ENCODE measurements at regions of chr17 and their contacts with region 1.

Region 1: DNA sequence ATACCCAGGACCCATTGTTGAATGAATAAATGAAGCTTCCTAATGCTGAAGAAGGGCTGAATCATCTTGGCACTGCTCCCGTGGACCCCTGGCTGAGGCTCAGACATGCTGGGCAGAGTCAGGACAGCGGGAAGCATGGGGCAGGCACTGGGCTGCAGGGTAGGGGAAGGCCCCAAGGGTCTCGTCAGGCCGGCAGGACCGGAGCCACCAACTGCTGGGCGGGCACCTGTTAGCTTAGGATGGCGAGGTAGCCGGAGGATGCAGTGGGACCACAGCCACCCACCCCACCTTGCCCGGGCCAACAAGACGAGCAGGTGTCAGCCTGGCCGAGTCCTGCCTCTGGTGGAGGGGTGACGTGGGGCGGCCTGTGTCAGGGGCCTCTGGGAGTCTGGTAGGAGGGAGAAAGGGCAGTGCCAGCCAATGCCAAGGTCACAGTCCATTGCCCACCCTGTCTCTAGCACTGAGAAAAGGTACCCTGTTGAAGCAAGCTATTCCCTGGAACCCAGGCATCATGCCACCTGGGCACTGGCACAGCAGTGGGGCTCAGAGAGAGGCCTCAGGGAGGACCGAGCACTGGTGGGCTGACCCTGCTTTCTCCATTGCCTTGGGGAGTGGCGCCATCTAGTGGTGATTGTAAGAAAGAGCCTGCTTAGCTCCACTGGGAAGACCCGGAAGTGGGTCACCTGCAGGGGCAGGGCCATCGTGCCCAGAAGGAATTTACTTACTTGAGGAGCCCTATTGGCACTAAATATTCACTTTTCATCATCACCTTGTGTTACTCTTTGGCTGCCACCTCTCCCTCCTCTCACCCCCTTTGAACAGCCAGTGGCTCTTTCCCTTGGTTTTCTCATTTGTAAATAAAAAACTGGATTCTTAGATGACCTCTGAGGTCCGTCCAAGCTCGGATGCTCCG is 3.0 kb upstream of the DLX3 start:
- DNase-seq: peak; percentile 80 to 83 (median 82)
- H3K4me3 ChIP-seq: no peak overlapping the region
- H3K4me3 Mint-ChIP-seq: peak overlapping the region in 1 of 8 donors; percentile 43
- H3K27ac ChIP-seq: no peak overlapping the region
- H3K27ac Mint-ChIP-seq: peak overlapping the region in 1 of 7 donors; percentile 55
- H3K4me1 ChIP-seq: peaks cover 35% of the 10 kb centered on the region
- H3K4me1 Mint-ChIP-seq: peaks cover 19 to 43% (median 25%) of the 10 kb centered on the region in 4 donors
- H3K27me3 ChIP-seq: peaks cover 61% of the 10 kb centered on the region
- H3K27me3 Mint-ChIP-seq: peaks cover 62 to 64% of the 10 kb centered on the region in 2 donors

Region 2: GRCh38 chr17:49567871-49568694 is 430.0 kb before region 1 on chr17:
- CTCF ChIA-PET with region 1: interaction called, 47 read pairs
- POLR2A ChIA-PET with region 1: no interaction called
- intact Hi-C with region 1: loop called (anchors 1 kb)
- DNase-seq: peak; percentile 68 to 77 (median 74)
- H3K4me3 ChIP-seq: peak overlapping the region in 1 of 2 donors; percentile 56
- H3K4me3 Mint-ChIP-seq: peak overlapping the region; percentile 28 to 82 (median 60)
- H3K27ac ChIP-seq: no peak overlapping the region
- H3K27ac Mint-ChIP-seq: peak overlapping the region in 2 of 7 donors; percentile 46 to 54
- H3K4me1 ChIP-seq: peaks cover 10% of the 10 kb centered on the region
- H3K4me1 Mint-ChIP-seq: peaks cover 8 to 29% (median 19%) of the 10 kb centered on the region in 4 donors
- H3K27me3 ChIP-seq: no peaks in the 10 kb centered on the region
- H3K27me3 Mint-ChIP-seq: peaks cover 6 to 11% of the 10 kb centered on the region in 2 donors

Region 3: GRCh38 chr17:49741009-49741691 is 256.9 kb before region 1 on chr17:
- CTCF ChIA-PET with region 1: no interaction called
- POLR2A ChIA-PET with region 1: no interaction called
- intact Hi-C with region 1: no loop called
- DNase-seq: peak in 1 of 5 donors; percentile 45
- H3K4me3 ChIP-seq: peak overlapping the region; percentile 80 to 88
- H3K4me3 Mint-ChIP-seq: peak overlapping the region; percentile 93 to 99 (median 97)
- H3K27ac ChIP-seq: peak overlapping the region; percentile 99
- H3K27ac Mint-ChIP-seq: peak overlapping the region; percentile 99 to 100 (median 100)
- H3K4me1 ChIP-seq: peaks cover 97% of the 10 kb centered on the region
- H3K4me1 Mint-ChIP-seq: peaks cover 70 to 98% (median 81%) of the 10 kb centered on the region in 4 donors
- H3K27me3 ChIP-seq: no peaks in the 10 kb centered on the region
- H3K27me3 Mint-ChIP-seq: no peaks in the 10 kb centered on the region

Region 4: DNA sequence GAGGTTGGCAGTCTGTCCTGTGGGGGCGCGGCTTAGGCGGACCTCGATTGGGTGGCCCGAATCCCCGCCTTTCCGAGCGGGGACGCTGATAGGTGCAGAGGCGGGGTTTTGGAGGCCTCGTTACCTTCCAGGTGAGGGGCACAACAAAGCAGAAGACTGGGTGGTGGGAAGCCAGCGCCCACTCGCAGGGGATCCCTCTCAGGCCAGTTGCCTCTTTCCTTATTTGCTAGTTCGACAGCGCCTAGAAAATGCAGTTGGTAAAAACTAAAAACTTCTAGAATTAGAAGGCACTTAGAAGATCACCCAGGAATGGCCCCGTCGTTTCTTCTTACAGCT is 208.8 kb before region 1 on chr17:
- CTCF ChIA-PET with region 1: no interaction called
- POLR2A ChIA-PET with region 1: no interaction called
- intact Hi-C with region 1: no loop called
- DNase-seq: no peak
- H3K4me3 ChIP-seq: peak overlapping the region; percentile 33 to 96
- H3K4me3 Mint-ChIP-seq: peak overlapping the region; percentile 93 to 99 (median 96)
- H3K27ac ChIP-seq: peak overlapping the region; percentile 99
- H3K27ac Mint-ChIP-seq: peak overlapping the region; percentile 91 to 100 (median 98)
- H3K4me1 ChIP-seq: peaks cover 59% of the 10 kb centered on the region
- H3K4me1 Mint-ChIP-seq: peaks cover 42 to 70% (median 57%) of the 10 kb centered on the region in 4 donors
- H3K27me3 ChIP-seq: no peaks in the 10 kb centered on the region
- H3K27me3 Mint-ChIP-seq: no peaks in the 10 kb centered on the region

Region 5: DNA sequence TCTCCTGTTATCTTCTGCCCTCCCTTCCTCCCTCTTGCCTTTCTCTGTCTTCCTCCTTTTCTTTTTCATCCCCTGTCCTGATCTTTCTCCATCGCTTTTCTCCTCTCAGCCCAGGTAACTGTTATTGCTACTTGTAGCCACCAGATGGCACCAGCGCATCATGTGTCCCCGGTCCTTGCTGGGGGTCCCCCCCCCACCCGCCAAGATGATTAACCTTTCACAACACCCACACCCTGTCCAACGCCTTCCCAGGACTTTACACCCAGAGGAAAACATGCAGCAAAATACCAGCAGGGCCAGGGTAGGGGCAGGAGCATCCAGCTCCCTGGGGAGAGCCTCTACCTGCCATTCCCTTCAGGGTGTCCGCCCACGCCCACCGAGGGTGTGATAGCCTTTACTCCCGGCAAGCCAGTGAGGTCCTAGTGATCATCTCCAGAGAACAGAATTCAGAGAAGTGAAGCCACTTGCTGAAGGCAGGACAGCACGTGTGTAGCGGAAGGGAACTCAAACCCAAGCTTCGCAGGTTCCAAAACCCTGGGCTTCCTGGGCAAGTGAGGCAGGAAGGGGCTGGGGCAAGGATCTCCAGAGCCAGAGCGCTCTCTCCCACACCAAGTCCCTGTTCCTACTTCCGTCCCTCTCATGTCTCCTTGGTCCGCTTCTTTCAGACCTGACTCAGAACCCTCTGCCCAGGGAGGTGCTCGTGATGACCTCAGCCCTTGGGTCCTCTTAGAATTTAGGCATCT is 136.7 kb before region 1 on chr17:
- CTCF ChIA-PET with region 1: interaction called, 195 read pairs
- POLR2A ChIA-PET with region 1: interaction called, 4 read pairs
- intact Hi-C with region 1: loop called (anchors 1 kb)
- DNase-seq: peak in 4 of 5 donors; percentile 39 to 48 (median 44)
- H3K4me3 ChIP-seq: no peak overlapping the region
- H3K4me3 Mint-ChIP-seq: no peak overlapping the region
- H3K27ac ChIP-seq: no peak overlapping the region
- H3K27ac Mint-ChIP-seq: no peak overlapping the region
- H3K4me1 ChIP-seq: no peaks in the 10 kb centered on the region
- H3K4me1 Mint-ChIP-seq: peaks cover 0 to 3% (median 1%) of the 10 kb centered on the region in 4 donors
- H3K27me3 ChIP-seq: no peaks in the 10 kb centered on the region
- H3K27me3 Mint-ChIP-seq: peaks cover 3 to 7% of the 10 kb centered on the region in 2 donors

Region 6: GRCh38 chr17:49887086-49888028 is 110.7 kb before region 1 on chr17:
- CTCF ChIA-PET with region 1: interaction called, 21 read pairs
- POLR2A ChIA-PET with region 1: no interaction called
- intact Hi-C with region 1: no loop called
- DNase-seq: no peak
- H3K4me3 ChIP-seq: no peak overlapping the region
- H3K4me3 Mint-ChIP-seq: no peak overlapping the region
- H3K27ac ChIP-seq: no peak overlapping the region
- H3K27ac Mint-ChIP-seq: no peak overlapping the region
- H3K4me1 ChIP-seq: no peaks in the 10 kb centered on the region
- H3K4me1 Mint-ChIP-seq: no peaks in the 10 kb centered on the region
- H3K27me3 ChIP-seq: peaks cover 7% of the 10 kb centered on the region
- H3K27me3 Mint-ChIP-seq: peaks cover 31 to 45% of the 10 kb centered on the region in 2 donors

Region 7: GRCh38 chr17:49952209-49952911 is 45.7 kb before region 1 on chr17:
- CTCF ChIA-PET with region 1: interaction called, 212 read pairs
- POLR2A ChIA-PET with region 1: interaction called, 8 read pairs
- intact Hi-C with region 1: loop called (anchors 1 kb)
- DNase-seq: peak; percentile 69 to 78 (median 75)
- H3K4me3 ChIP-seq: no peak overlapping the region
- H3K4me3 Mint-ChIP-seq: no peak overlapping the region
- H3K27ac ChIP-seq: no peak overlapping the region
- H3K27ac Mint-ChIP-seq: no peak overlapping the region
- H3K4me1 ChIP-seq: no peaks in the 10 kb centered on the region
- H3K4me1 Mint-ChIP-seq: peaks cover 0 to 3% (median 0%) of the 10 kb centered on the region in 4 donors
- H3K27me3 ChIP-seq: peaks cover 9% of the 10 kb centered on the region
- H3K27me3 Mint-ChIP-seq: peaks cover 21 to 52% of the 10 kb centered on the region in 2 donors

Region 8: GRCh38 chr17:49980703-49981197 is 17.3 kb before region 1 on chr17:
- CTCF ChIA-PET with region 1: interaction called, 42 read pairs
- POLR2A ChIA-PET with region 1: no interaction called
- intact Hi-C with region 1: no loop called
- DNase-seq: no peak
- H3K4me3 ChIP-seq: no peak overlapping the region
- H3K4me3 Mint-ChIP-seq: no peak overlapping the region
- H3K27ac ChIP-seq: no peak overlapping the region
- H3K27ac Mint-ChIP-seq: no peak overlapping the region
- H3K4me1 ChIP-seq: no peaks in the 10 kb centered on the region
- H3K4me1 Mint-ChIP-seq: no peaks in the 10 kb centered on the region
- H3K27me3 ChIP-seq: no peaks in the 10 kb centered on the region
- H3K27me3 Mint-ChIP-seq: peaks cover 21 to 39% of the 10 kb centered on the region in 2 donors

Region 9: DNA sequence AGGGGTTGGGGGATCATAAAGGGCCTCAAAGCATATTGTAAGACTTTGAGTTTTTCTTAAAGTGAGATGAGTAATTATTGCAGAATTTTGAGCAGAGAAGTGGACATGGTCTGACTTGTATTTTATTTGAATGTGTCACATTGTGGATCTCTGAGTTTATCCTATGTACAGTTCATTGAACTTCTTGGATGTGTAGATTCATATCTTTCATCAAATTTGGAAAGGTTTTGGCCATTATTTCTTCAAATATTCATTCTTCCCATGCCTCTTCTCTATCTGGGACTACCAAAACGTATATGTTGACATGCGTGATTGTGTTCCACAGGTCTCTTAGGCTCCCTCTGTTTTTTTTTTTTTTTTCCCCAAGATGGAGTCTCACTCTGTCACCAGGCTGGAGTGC is 11.2 kb after region 1 on chr17:
- CTCF ChIA-PET with region 1: interaction called, 18 read pairs
- POLR2A ChIA-PET with region 1: no interaction called
- intact Hi-C with region 1: no loop called
- DNase-seq: no peak
- H3K4me3 ChIP-seq: no peak overlapping the region
- H3K4me3 Mint-ChIP-seq: no peak overlapping the region
- H3K27ac ChIP-seq: no peak overlapping the region
- H3K27ac Mint-ChIP-seq: no peak overlapping the region
- H3K4me1 ChIP-seq: no peaks in the 10 kb centered on the region
- H3K4me1 Mint-ChIP-seq: no peaks in the 10 kb centered on the region
- H3K27me3 ChIP-seq: no peaks in the 10 kb centered on the region
- H3K27me3 Mint-ChIP-seq: peaks cover 29 to 43% of the 10 kb centered on the region in 2 donors

Region 10: DNA sequence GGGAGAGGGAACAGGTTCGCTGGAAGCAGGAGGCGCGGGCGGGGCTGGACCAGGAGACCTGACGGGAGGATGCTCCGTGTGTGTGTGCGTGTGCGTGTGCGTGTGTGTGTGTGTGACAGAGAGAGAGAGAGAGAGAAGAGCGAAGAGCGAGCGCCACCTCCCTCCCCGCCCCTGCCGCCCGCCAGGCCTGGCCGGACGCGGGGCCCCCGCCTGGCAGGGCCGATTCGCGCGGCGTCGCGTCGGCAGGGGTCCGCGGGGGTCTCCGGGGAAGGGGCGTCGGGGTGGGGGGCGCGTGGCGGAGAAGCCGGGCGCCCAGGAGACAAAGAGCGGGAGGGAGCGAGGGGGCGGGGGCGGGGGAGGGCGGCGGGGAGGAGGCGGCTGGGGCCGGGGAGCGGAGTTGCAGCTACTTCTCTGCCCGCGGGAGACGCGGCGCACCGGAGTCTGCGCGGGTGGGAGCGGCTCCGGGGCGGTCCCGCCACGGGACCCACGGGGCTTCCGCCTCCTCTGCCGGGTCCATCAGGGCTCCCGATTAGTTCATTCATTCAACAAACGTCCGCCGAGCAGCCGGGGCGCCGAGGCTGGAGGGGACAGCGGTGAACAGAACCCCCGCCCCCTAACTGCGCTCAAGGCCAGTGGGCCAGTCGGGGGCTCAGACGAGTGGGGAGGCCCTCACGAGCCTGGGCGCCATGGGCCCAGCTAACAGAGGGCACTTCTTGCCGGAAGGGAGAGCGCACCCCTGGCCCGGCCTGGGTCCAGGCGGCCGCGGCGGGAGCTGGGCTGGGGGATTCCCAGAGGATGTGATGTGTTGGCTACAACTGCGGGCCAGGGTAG is 131.9 kb after region 1 on chr17 and contains the start of gene SAMD14:
- CTCF ChIA-PET with region 1: no interaction called
- POLR2A ChIA-PET with region 1: no interaction called
- intact Hi-C with region 1: no loop called
- DNase-seq: peak; percentile 63 to 80 (median 68)
- H3K4me3 ChIP-seq: peak within 1 kb of the TSS in 1 of 2 donors; percentile 49
- H3K4me3 Mint-ChIP-seq: peak within 1 kb of the TSS; percentile 76 to 95 (median 84)
- H3K27ac ChIP-seq: no peak within 1 kb of the TSS
- H3K27ac Mint-ChIP-seq: peak within 1 kb of the TSS; percentile 72 to 99 (median 92)
- H3K4me1 ChIP-seq: peaks cover 26% of the 10 kb centered on the region
- H3K4me1 Mint-ChIP-seq: peaks cover 11 to 42% (median 26%) of the 10 kb centered on the region in 4 donors
- H3K27me3 ChIP-seq: peaks cover 6% of the 10 kb centered on the region
- H3K27me3 Mint-ChIP-seq: peaks cover 3 to 7% of the 10 kb centered on the region in 2 donors
- total RNA-seq, gene SAMD14: 1.2 to 1.3 TPM

Measured in CD4-positive, alpha-beta memory T cell (primary cell).